ENCODE measurements at regions of chr4 and their contacts with region 1.

Region 1: DNA sequence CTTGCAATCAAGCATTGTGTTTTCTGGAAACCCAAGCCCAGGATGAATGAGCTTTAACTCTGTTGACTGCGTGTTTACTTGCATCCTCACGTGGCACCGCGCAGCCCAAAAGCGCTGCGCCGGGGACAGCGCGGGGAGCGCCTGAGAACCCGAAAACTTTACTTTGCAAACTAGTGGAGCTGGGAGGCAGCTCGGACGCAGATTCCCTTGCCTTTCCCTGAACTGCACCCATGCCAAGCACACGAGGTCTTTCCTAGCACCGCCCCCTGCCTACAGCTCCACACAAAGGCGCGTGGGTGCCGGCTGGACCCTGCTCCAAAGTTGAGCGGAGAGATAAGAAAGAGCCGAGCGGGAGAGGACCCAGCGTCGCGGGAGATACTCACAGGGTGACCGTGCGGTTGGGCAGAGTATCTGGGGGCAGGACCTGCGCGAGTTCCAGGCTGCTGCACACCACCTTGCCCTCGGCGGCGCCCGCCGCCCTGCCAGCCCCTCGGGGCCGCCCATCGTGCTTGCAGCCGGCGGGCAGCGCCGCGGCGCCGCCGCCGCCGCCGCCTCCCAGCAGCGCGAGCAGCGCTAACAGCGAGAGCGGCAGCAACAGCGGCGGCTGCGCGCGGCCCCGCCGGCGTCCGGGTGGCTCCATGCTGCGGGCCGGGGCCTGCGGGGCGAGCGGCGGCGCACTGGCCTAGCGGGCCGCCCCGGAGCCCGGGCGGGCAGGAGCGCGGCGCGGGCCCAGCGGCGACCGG is 550 bp downstream of the ADGRA3 start:
- DNase-seq: peak; percentile 76
- ATAC-seq: peak; percentile 76
- H3K4me3 ChIP-seq: peak overlapping the region; percentile 60 to 80 (median 64)
- H3K27ac ChIP-seq: peak overlapping the region; percentile 83 to 94 (median 88)
- H3K4me1 ChIP-seq: peaks cover 13 to 24% of the 10 kb centered on the region in 2 donors
- H3K27me3 ChIP-seq: no peaks in the 10 kb centered on the region
- CTCF ChIP-seq: peak in 2 of 5 experiments; percentile 13 to 21
- POLR2A ChIP-seq: peak; percentile 23 to 54

Region 2: DNA sequence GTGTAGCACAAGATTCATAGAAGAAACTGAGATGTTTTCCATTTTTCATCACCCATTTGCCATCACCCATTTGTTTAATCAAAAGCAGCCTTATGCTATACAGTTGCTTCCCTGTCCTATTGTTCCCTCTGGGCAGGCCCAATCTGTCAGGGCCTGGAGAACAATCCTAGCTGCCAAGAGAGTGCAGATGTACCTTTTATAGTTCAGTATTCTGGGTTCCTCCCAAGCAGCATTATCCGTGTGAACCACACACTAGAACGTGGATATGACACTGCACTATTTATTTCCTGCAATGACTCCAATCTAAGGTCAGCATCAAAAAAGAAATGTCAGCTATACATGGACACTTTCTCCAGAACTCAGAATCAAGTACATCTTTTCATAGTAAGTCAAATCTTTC is 268.5 kb before region 1 on chr4:
- in situ Hi-C with region 1: no loop called
- intact Hi-C with region 1: no loop called
- DNase-seq: no peak
- ATAC-seq: no peak
- H3K4me3 ChIP-seq: no peak overlapping the region
- H3K27ac ChIP-seq: no peak overlapping the region
- H3K4me1 ChIP-seq: no peaks in the 10 kb centered on the region
- H3K27me3 ChIP-seq: no peaks in the 10 kb centered on the region
- CTCF ChIP-seq: no peak
- POLR2A ChIP-seq: no peak

Region 3: GRCh38 chr4:22410645-22411247 is 104.6 kb before region 1 on chr4:
- in situ Hi-C with region 1: no loop called
- intact Hi-C with region 1: loop called (anchors 5 kb)
- DNase-seq: no peak
- ATAC-seq: no peak
- H3K4me3 ChIP-seq: no peak overlapping the region
- H3K27ac ChIP-seq: no peak overlapping the region
- H3K4me1 ChIP-seq: no peaks in the 10 kb centered on the region
- H3K27me3 ChIP-seq: no peaks in the 10 kb centered on the region
- CTCF ChIP-seq: peak; percentile 26 to 68 (median 32)
- POLR2A ChIP-seq: no peak

Region 4: GRCh38 chr4:22427675-22428074 is 87.6 kb before region 1 on chr4:
- in situ Hi-C with region 1: no loop called
- intact Hi-C with region 1: loop called (anchors 5 kb)
- DNase-seq: peak; percentile 19 to 57
- ATAC-seq: peak; percentile 60 to 86
- H3K4me3 ChIP-seq: no peak overlapping the region
- H3K27ac ChIP-seq: peak overlapping the region; percentile 56 to 81 (median 74)
- H3K4me1 ChIP-seq: peaks cover 21 to 25% of the 10 kb centered on the region in 2 donors
- H3K27me3 ChIP-seq: no peaks in the 10 kb centered on the region
- CTCF ChIP-seq: no peak
- POLR2A ChIP-seq: no peak

Region 5: DNA sequence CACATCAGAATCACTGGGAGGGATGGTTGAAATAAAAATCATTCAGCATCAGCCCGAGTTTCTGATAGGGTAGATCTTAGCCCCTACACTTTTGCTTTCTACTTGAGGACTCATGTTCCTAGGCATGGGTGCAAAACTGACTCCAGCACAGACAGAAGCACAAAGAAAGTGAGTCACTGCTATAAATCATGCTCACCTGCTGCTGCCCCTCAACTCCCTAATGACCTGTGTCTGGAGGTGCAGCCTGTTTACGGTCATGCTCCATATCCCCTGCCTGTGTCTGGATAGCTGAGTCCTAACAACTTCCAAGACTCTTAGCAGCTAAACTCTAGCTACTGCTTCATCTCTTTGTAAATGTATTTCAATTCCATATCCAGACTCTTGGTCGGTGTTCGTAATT is 57.2 kb before region 1 on chr4:
- in situ Hi-C with region 1: no loop called
- intact Hi-C with region 1: loop called (anchors 2 kb)
- DNase-seq: peak; percentile 67 to 86
- ATAC-seq: peak; percentile 99
- H3K4me3 ChIP-seq: no peak overlapping the region
- H3K27ac ChIP-seq: peak overlapping the region; percentile 71 to 76 (median 76)
- H3K4me1 ChIP-seq: peaks cover 25 to 38% of the 10 kb centered on the region in 2 donors
- H3K27me3 ChIP-seq: no peaks in the 10 kb centered on the region
- CTCF ChIP-seq: no peak
- POLR2A ChIP-seq: no peak

Region 6: DNA sequence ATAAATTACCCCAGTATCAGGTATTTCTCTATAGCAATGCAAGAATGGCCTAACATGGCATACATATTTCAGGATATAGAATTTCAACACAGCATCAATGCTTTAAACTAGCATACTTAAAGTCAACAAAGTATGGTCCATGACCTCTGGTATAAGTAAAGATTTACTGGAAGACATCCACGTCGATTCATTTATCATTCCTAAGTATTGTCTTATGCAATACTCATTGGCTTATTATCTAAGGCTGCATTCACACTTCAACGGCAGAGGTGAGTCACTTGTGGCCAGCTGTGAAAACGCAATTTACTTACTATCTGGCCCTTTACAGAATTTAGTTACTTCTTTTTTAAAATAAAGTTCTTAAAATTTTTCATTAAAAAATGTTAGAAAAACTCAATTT is 42.0 kb before region 1 on chr4:
- in situ Hi-C with region 1: no loop called
- intact Hi-C with region 1: loop called (anchors 5 kb)
- DNase-seq: no peak
- ATAC-seq: no peak
- H3K4me3 ChIP-seq: no peak overlapping the region
- H3K27ac ChIP-seq: peak overlapping the region in 3 of 4 donors; percentile 71 to 84 (median 76)
- H3K4me1 ChIP-seq: peaks cover 32 to 64% of the 10 kb centered on the region in 2 donors
- H3K27me3 ChIP-seq: no peaks in the 10 kb centered on the region
- CTCF ChIP-seq: no peak
- POLR2A ChIP-seq: no peak

Region 7: DNA sequence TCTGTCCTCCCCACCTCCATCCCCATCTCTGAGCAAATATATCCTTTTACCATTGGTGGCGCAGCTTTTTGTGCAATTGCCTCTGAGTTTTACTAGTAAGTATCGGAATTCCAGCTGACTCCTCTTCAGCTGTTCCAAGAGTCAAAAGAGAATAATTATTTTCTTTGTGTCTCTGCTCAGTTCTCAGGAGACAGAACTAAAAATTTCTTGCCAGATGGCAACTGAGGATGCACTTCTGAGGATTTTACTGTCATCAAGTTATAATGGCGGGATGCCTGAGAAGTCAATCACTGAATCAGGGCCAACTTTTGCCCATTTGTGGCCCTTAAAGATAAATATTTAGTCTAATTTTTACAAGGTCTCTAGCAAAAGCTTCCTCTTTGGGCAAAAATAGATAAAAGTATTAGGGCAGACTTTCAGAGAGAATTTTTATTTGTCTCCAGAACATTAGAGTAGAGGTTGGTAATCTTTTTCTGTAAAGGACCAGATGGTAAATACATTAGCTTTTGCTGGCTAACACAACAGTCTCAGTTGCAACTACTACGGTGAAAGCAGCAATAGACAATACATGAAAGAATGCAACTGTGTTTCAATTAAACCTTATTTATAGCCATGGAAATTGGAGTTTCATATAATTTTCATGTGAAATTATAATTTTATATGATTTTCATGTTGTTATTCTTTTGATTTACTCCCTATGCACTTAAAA is 16.1 kb after region 1 on chr4:
- in situ Hi-C with region 1: no loop called
- intact Hi-C with region 1: no loop called
- DNase-seq: no peak
- ATAC-seq: no peak
- H3K4me3 ChIP-seq: no peak overlapping the region
- H3K27ac ChIP-seq: no peak overlapping the region
- H3K4me1 ChIP-seq: no peaks in the 10 kb centered on the region
- H3K27me3 ChIP-seq: no peaks in the 10 kb centered on the region
- CTCF ChIP-seq: no peak
- POLR2A ChIP-seq: no peak

Region 8: GRCh38 chr4:22607382-22607781 is 92.1 kb after region 1 on chr4:
- in situ Hi-C with region 1: no loop called
- intact Hi-C with region 1: loop called (anchors 10 kb)
- DNase-seq: peak; percentile 14 to 34
- ATAC-seq: peak; percentile 74 to 77
- H3K4me3 ChIP-seq: no peak overlapping the region
- H3K27ac ChIP-seq: no peak overlapping the region
- H3K4me1 ChIP-seq: no peaks in the 10 kb centered on the region
- H3K27me3 ChIP-seq: no peaks in the 10 kb centered on the region
- CTCF ChIP-seq: peak; percentile 9 to 72 (median 56)
- POLR2A ChIP-seq: no peak

Measured in gastrocnemius medialis (tissue), 4 donors.